K562 (cell line): ENCODE measurements at regions of chr5 and their contacts with region 1.

Region 1: GRCh38 chr5:88690409-88691229 is 192.4 kb downstream of the MEF2C start:
- DNase-seq: peak; percentile 73 to 79 (median 75)
- ATAC-seq: peak; percentile 93
- H3K4me3 ChIP-seq: no peak overlapping the region
- H3K27ac ChIP-seq: no peak overlapping the region
- H3K4me1 ChIP-seq: peaks cover 0 to 14% of the 10 kb centered on the region in 2 experiments; a peak in 2 of 5 replicates
- H3K27me3 ChIP-seq: peaks cover 51 to 69% of the 10 kb centered on the region in 2 experiments
- CTCF ChIP-seq: peak; percentile 86 to 94 (median 92)
- EP300 ChIP-seq: no peak
- POLR2A ChIP-seq: no peak
- RAD21 ChIP-seq: peak; percentile 86 to 91

Region 2: GRCh38 chr5:87412630-87413342 is 1277.8 kb before region 1 on chr5 and contains the start of gene CCNH:
- CTCF ChIA-PET with region 1: no interaction called
- POLR2A ChIA-PET with region 1: interaction called, 6 read pairs
- in situ Hi-C with region 1: no loop called
- intact Hi-C with region 1: loop called (anchors 10 kb)
- DNase-seq: peak; percentile 94 to 99 (median 95)
- ATAC-seq: peak; percentile 98
- H3K4me3 ChIP-seq: peak within 1 kb of the TSS; percentile 98
- H3K27ac ChIP-seq: peak within 1 kb of the TSS; percentile 98
- H3K4me1 ChIP-seq: peaks cover 0 to 6% of the 10 kb centered on the region in 2 experiments; a peak in 2 of 5 replicates
- H3K27me3 ChIP-seq: no peaks in the 10 kb centered on the region
- CTCF ChIP-seq: no peak
- EP300 ChIP-seq: peak; percentile 40
- POLR2A ChIP-seq: peak; percentile 92
- RAD21 ChIP-seq: no peak
- polyA plus RNA-seq, gene CCNH: 208 to 213 TPM